Calu3 (cell line): ENCODE measurements at regions of chr19 and their contacts with region 1.

Region 1: GRCh38 chr19:44356383-44357111 is at the start of gene ZNF112:
- DNase-seq: peak; percentile 94
- H3K4me3 Mint-ChIP-seq: peak within 1 kb of the TSS; percentile 76
- H3K27ac Mint-ChIP-seq: peak within 1 kb of the TSS; percentile 79
- H3K4me1 Mint-ChIP-seq: no peaks in the 10 kb centered on the region
- H3K27me3 Mint-ChIP-seq: no peaks in the 10 kb centered on the region
- CTCF ChIP-seq: no peak
- total RNA-seq, gene ZNF112: 5.6 and 5.7 TPM in 2 replicates

Region 2: DNA sequence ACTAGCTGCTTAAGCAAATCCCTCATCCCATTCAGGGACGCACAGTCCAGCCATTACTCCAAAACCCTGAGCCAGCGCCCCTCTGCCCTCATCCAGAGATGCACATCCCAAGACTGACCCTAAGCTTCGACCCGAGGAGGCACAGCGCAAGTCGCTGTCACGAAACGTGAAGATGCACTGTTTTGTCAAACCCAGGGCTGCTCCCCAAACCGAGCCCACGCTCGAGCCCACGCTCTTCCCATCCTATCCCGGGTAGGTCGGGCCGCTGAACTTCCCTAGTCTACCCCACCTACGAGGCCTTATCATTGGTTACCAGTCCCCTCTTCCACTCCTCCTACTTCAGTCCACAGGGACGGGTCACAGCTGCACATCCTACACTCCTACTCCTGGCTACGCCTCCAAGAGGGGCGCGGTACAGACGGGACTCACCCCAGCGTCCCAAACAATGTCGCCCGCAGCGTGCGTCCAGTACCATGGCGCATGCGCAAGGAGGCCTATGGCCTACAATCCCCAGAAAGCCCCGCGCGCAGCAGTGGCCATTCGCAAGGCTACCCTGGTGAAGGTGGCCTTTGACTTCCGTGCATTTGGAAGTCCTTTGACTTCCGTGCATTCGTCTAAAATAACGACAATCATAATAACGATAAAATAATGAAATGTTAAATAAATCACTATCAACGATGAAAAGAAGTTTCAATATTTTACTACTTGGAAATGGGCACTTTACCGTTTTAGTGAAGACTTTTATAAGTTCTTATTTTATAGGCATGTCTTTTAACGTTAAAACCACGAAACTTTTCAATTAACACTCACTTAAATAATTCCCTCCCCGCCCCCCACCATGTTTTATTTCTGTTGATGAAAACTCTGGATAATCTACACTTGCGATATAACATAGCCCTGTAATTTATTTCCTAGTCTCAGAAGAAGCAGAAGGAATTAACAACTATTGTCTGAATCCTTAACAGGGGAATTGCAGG is 44.9 kb after region 1 on chr19 and contains the start of gene ZNF285:
- CTCF ChIA-PET with region 1: no interaction called
- intact Hi-C with region 1: loop called (anchors 2 kb)
- DNase-seq: peak; percentile 97
- H3K4me3 Mint-ChIP-seq: peak within 1 kb of the TSS; percentile 76
- H3K27ac Mint-ChIP-seq: peak within 1 kb of the TSS; percentile 29
- H3K4me1 Mint-ChIP-seq: no peaks in the 10 kb centered on the region
- H3K27me3 Mint-ChIP-seq: no peaks in the 10 kb centered on the region
- CTCF ChIP-seq: no peak
- total RNA-seq, gene ZNF285: 5.8 and 6.5 TPM in 2 replicates

Region 3: DNA sequence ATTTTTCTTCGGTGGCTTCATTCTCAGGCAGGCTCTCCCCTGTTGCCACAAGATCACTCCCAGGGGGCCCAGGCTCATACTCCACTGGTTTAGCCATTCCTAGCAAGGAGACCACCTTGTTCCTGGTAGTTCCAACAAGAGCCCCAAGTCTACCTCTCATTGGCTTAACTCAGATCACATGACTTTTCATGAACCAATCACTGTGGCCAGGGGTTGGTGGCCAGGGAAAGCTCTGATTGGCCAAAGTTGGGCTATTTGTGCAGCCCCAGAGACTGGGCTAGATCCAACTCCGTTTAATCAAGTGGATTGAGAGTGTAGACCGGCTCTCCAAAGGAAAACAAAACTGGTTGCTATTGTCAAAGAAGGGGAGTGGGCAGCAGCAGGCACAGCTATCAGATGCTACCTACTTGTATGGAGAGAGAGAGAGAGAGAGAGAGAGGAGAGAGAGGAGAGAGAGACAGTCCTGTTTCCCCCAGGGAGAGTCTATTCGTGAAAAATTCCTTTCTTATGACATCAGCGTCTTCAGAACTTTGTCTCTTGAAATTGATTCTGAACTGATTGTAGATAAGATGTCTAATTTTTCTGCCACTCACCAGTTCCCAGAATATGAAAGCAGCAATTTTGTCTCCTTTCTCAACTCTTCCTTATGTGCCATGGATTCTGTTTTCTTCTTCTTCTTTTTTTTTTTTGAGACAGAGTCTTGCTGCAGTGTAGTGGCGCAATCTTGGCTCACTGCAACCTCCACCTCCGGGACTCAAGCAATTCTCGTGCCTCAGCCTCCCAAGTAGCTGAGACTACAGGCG is 320.7 kb after region 1 on chr19:
- CTCF ChIA-PET with region 1: no interaction called
- intact Hi-C with region 1: no loop called
- DNase-seq: no peak
- H3K4me3 Mint-ChIP-seq: no peak overlapping the region
- H3K27ac Mint-ChIP-seq: peak overlapping the region; percentile 33
- H3K4me1 Mint-ChIP-seq: peaks cover 23% of the 10 kb centered on the region
- H3K27me3 Mint-ChIP-seq: no peaks in the 10 kb centered on the region
- CTCF ChIP-seq: no peak